ENCODE measurements at regions of chr14 and their contacts with region 1.

Region 1: DNA sequence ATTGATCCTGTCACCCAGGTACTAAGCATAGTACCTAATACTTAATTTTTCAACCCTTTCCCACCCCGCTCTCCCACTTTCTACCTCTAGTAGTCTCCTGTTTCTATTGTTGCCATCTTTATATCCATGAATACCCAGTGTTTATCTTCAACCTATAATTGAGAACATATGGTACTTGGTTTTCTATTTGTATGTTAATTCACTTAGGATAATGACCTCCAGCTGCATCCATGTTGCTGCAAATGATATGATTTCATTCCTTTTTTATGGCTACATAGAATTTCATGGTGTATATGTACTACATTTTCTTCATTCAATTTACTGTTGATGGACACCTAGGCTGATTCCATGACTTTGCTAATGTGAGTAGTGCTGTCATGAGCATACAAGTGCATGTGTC is 547.3 kb upstream of the NOVA1 start:
- DNase-seq: no peak
- ATAC-seq: no peak
- H3K4me3 Mint-ChIP-seq: no peak overlapping the region
- H3K27ac Mint-ChIP-seq: no peak overlapping the region
- H3K4me1 Mint-ChIP-seq: no peaks in the 10 kb centered on the region
- H3K27me3 Mint-ChIP-seq: no peaks in the 10 kb centered on the region
- CTCF ChIP-seq: no peak

Region 2: DNA sequence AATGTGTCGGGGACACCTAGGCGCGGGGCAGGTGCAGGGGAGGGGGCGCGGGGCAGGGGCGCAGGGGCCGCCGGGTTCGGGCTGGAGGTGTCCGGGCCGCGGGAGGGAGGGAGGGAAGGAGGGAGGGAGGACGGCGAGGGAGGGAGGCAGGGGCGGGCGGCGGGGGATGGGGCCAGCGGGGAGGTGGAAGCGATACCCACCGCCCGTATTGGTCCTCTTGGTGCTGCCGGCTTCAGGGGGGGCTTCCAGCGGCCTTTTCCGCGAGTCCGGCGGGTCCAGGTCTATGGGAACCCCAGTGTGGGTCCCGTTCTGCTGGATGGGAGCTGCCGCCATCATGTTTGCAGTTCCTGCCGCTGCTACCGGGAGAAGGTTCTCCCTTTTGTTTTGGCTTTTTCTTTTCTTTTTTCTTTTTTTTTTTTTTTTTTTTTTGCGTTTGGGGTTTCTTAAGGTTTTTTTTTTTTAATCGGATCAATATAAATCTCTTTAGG is 548.0 kb before region 1 on chr14:
- CTCF ChIA-PET with region 1: no interaction called
- POLR2A ChIA-PET with region 1: interaction called, 10 read pairs
- DNase-seq: peak; percentile 69
- ATAC-seq: peak; percentile 4
- H3K4me3 Mint-ChIP-seq: peak overlapping the region; percentile 97
- H3K27ac Mint-ChIP-seq: peak overlapping the region; percentile 88; the same call in 1 of the 2 replicates
- H3K4me1 Mint-ChIP-seq: peaks cover 38% of the 10 kb centered on the region
- H3K27me3 Mint-ChIP-seq: peaks cover 10% of the 10 kb centered on the region
- CTCF ChIP-seq: no peak